ENCODE measurements at regions of chr20 and their contacts with region 1.

Region 1: DNA sequence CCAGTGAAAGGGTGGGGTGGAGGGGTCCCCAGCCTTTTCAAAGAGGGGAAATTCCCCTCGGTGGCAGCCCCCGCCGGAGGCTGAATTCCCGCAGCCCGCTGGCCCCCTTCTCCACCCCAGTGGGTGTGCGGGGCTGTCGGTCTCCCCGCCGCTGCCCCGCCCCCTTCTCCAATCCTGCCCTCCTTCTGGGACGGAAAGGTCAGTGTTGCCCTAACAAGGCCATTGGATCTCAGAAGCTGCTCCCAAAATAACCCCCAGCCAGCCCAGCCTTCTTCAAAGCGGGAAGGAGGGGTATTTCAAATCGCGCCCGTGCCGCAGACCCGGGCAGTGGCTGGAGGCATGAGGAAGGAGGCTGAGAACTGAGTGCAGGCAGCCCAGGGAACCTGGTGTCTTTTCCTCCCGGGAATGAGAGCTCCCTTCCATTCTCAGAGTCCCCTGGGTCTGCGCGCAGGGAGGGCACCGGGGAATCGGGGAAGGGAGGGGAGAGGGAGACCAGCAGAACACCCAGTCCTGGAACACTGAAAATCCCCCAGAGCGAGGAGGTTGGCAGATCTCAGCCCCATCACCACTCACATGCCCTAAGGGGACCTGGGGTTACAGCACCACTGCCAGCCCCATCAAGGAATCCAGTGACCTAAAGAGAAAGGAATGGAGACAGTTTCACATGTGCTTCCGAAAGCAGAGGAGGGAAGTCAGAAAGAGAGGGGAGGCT is at the start of gene JPH2:
- DNase-seq: peak; percentile 71 to 88
- ATAC-seq: peak; percentile 70 to 84 (median 78)
- H3K4me3 ChIP-seq: peak within 1 kb of the TSS; percentile 84
- H3K27ac ChIP-seq: peak within 1 kb of the TSS; percentile 94
- H3K4me1 ChIP-seq: peaks cover 54% of the 10 kb centered on the region
- H3K27me3 ChIP-seq: no peaks in the 10 kb centered on the region
- CTCF ChIP-seq: no peak
- total RNA-seq, gene JPH2: 48.0 to 145 (median 81.8) TPM

Region 2: GRCh38 chr20:44115762-44116644 is 71.2 kb before region 1 on chr20:
- intact Hi-C with region 1: loop called (anchors 1 kb)
- DNase-seq: no peak
- ATAC-seq: peak; percentile 6 to 27 (median 16)
- H3K4me3 ChIP-seq: no peak overlapping the region
- H3K27ac ChIP-seq: peak overlapping the region; percentile 60
- H3K4me1 ChIP-seq: peaks cover 9% of the 10 kb centered on the region
- H3K27me3 ChIP-seq: no peaks in the 10 kb centered on the region
- CTCF ChIP-seq: no peak

Region 3: DNA sequence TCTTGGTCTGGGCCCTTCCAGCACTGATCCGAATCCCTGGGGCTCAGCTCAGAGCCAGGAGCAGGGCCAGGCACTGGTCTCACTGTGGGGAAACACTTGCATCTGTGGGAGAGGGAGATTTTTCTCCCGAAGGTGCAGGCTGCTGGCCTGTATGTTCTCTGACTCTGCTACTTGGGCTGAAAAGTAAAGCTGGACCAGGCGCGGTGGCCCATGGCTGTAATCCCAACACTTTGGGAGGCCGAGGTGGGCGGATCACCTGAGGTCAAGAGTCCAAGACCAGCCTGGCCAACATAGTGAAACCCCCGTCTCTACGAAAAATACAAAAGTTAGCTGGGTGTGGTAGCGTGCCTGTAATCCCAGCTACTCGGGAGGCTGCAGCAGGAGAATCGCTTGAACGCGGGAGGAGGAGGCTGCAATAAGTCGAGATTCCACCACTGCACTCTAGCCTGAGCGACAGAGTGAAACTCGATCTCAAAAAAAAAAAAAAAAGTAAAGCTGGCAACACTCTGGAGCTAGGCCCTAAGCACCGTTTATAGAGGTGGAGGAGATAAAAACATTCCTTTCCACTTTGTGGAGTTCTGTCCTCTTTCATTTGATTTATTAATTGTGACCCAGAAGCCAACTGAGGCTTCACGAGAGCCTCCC is 42.0 kb before region 1 on chr20:
- intact Hi-C with region 1: loop called (anchors 2 to 5 kb)
- DNase-seq: no peak
- ATAC-seq: peak; percentile 44 to 60 (median 58)
- H3K4me3 ChIP-seq: no peak overlapping the region
- H3K27ac ChIP-seq: peak overlapping the region; percentile 91
- H3K4me1 ChIP-seq: peaks cover 62% of the 10 kb centered on the region
- H3K27me3 ChIP-seq: no peaks in the 10 kb centered on the region
- CTCF ChIP-seq: no peak

Measured in psoas muscle (tissue), 8 donors.